Activated CD4-positive, alpha-beta memory T cell treated with anti-CD3 and anti-CD28 coated beads for 36 hours (primary cell): ENCODE measurements at regions of chr12 and their contacts with region 1.

Region 1: GRCh38 chr12:113135178-113136127 is at the start of gene RASAL1:
- DNase-seq: peak; percentile 91
- H3K4me3 Mint-ChIP-seq: peak within 1 kb of the TSS; percentile 78
- H3K27ac Mint-ChIP-seq: peak within 1 kb of the TSS; percentile 91
- H3K4me1 Mint-ChIP-seq: peaks cover 17% of the 10 kb centered on the region
- H3K27me3 Mint-ChIP-seq: peaks cover 5% of the 10 kb centered on the region
- total RNA-seq, gene RASAL1: 4.4 to 4.9 TPM

Region 2: DNA sequence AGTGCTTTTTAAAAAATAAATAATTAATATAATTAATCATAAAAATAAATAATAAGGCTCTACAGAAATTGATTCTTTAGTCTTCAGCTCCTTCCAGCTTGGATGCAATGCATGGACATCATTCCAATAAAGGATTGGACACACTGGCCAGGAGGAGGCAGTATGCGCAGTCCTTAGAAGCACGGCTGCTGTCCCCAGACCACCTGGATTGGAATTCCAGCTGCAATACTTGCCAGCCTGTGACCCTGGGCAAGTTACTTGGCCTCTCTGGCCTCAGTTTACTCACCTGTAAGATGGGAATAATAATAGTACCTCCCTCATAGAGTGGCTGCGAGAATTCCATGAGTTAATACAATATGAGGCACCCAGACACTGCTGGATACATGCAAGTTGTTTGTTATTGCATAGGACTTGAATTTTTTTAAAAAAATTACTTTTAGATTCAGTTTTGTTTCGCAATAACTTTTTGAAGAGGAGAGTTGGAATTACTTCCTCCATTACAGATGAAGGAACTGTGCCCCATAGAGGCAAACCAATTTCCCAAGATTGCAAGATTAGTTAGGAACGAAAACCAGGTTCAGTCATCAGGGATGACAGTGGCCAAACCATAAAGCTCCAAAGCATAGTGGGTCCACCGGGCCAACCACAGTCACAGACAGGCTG is 331.7 kb before region 1 on chr12:
- CTCF ChIA-PET with region 1: no interaction called
- POLR2A ChIA-PET with region 1: no interaction called
- intact Hi-C with region 1: no loop called
- DNase-seq: no peak
- H3K4me3 Mint-ChIP-seq: no peak overlapping the region
- H3K27ac Mint-ChIP-seq: no peak overlapping the region
- H3K4me1 Mint-ChIP-seq: no peaks in the 10 kb centered on the region
- H3K27me3 Mint-ChIP-seq: peaks cover 35% of the 10 kb centered on the region

Region 3: DNA sequence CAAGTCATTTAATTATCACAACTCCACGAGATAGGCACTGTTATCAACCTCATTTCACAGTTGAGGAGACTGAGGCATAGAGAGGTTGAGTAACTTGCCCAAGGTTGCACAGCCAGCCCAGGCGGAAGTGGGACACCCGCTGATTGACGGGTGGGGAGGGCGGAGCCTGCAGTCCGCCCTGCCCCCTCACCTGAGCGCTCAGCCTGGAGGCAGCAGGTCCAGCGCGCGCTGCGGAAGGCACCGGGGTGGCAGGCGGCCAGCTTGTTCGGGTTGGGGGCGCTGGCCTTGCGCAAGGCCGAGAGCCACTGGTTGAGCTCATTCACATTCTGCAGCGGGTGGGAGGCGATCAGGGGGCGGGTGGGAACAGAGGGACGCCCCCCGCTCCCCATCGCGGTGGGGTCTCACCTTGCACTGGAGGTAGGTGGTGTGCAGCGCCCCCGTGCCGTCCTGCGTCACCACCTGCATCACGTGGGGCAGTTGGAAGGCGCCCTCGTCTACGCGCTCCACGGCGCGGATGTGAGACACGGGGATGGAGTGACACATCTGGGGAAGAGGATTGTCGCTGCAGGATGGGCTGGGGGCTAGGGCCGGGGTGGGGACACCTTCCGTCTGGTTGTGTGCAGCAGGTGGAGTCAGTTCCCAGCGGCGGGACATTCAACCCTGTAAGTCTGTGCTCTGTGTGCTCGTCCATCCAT is 31.6 kb before region 1 on chr12:
- CTCF ChIA-PET with region 1: interaction called, 4 read pairs
- POLR2A ChIA-PET with region 1: no interaction called
- intact Hi-C with region 1: loop called (anchors 2 kb)
- DNase-seq: peak; percentile 84
- H3K4me3 Mint-ChIP-seq: peak overlapping the region; percentile 70
- H3K27ac Mint-ChIP-seq: peak overlapping the region; percentile 69
- H3K4me1 Mint-ChIP-seq: peaks cover 10% of the 10 kb centered on the region
- H3K27me3 Mint-ChIP-seq: no peaks in the 10 kb centered on the region

Region 4: DNA sequence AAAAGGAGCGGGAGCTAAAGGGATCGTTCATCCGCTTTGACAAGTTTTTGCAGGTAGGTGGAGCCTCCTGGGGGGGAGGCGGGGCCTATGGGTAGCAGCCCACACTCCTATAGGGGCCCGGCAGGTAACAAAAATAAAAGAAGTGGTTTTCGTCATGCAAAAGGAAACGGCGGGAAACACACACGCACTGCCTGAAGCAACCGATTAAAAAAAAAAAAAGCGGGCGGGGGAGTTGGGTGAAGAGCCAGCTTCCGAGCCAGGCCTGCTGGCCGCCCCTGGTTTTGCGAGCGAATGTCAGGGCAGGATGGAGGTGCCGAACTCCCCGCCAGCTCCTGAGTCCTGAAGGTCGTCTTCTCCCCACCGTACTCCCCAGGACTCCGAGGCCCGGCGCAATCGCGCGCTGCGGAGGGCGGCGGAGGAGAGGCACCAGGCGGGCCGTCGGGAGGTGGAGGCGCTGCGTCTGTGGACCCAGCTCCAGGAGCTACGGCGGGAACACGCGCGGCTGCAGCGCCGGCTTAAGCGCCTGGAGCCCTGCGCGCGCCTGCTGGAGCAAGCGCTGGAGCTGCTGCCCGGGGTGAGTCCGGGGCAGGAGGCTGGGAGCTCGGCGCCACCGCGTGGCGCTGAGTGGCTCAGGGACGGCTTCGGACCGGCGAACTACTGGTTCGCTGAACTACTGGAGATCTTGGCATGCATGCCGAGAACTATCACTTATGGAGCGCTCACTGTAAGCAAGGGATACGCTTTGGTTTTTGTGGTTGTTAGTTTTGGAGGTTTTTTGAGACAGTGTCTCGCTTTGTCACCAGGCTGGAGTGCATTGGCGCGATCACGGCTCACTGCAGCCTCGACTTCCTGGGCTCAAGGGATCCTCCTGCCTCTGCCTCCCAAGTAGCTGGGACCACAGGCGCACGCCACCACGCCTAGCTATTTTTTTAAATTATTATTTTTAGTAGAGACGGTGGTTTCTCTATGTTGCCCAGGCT is 17.7 kb after region 1 on chr12:
- CTCF ChIA-PET with region 1: interaction called, 19 read pairs
- POLR2A ChIA-PET with region 1: interaction called, 10 read pairs
- intact Hi-C with region 1: loop called (anchors 1 kb)
- DNase-seq: peak; percentile 76
- H3K4me3 Mint-ChIP-seq: peak overlapping the region; percentile 73
- H3K27ac Mint-ChIP-seq: no peak overlapping the region
- H3K4me1 Mint-ChIP-seq: peaks cover 23% of the 10 kb centered on the region
- H3K27me3 Mint-ChIP-seq: peaks cover 8% of the 10 kb centered on the region